Adrenal gland (tissue), 19 donors: ENCODE measurements at regions of chr16 and their contacts with region 1.

Region 1: DNA sequence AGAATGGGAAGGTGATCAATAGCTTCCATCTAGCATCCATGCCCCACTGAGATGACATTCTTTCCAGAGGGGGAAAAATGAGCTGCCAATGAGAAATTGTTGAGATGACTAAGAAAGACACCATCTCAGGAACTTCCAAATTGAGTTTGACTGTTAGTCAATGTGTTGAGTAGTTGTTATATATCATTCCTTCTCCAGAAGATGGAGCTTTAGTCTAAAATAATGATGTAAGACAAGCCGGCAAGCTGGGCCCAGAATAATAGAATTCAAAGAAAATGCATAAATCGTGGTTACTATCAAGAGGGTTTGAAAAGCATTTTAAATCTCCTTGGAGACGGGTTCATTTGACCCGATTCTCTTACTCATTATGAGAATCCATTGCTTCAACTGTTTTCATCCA is 71.0 kb upstream of the ATF7IP2 start:
- DNase-seq: peak in 1 of 7 donors; percentile 47
- H3K4me3 ChIP-seq: no peak overlapping the region
- H3K27ac ChIP-seq: no peak overlapping the region
- H3K4me1 ChIP-seq: no peaks in the 10 kb centered on the region
- H3K27me3 ChIP-seq: no peaks in the 10 kb centered on the region
- CTCF ChIP-seq: peak in 5 of 6 experiments; percentile 23 to 51 (median 39)
- POLR2A ChIP-seq: no peak

Region 2: GRCh38 chr16:10509534-10510025 is 194.8 kb after region 1 on chr16:
- intact Hi-C with region 1: loop called (anchors 5 kb)
- DNase-seq: peak; percentile 69 to 83 (median 74)
- H3K4me3 ChIP-seq: no peak overlapping the region
- H3K27ac ChIP-seq: no peak overlapping the region
- H3K4me1 ChIP-seq: peaks cover 5 to 6% of the 10 kb centered on the region in 2 donors
- H3K27me3 ChIP-seq: no peaks in the 10 kb centered on the region
- CTCF ChIP-seq: peak; percentile 62 to 92 (median 88)
- POLR2A ChIP-seq: no peak